Activated CD4-positive, alpha-beta memory T cell treated with anti-CD3 and anti-CD28 coated beads, Interleukin-2, amount 10 ng/mL, durations not matched to agents 7 days and 5 days (primary cell): ENCODE measurements at regions of chr7 and their contacts with region 1.

Region 1: DNA sequence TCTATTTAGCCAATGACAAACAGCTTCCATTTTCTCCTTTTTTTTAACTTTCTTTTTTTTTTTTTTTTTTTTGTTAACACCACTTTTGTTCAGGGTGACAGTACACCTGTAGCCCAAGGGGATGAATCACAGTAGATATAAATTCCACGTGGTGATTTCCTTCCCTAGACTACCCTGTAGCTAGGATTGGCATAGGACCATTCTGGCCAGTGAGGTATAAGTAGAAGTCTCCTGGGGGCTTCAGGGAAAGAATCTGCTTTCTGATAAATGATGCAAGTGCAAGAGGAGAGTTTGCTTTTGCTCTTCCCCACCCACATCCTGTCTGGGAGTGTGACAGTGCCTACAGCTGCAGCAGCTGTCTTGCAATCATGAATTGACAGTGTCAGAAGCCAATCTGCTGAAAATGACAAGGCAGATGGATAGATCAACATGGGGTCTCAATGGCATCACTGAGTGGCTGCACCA is 63.2 kb upstream of the TOMM7 start:
- DNase-seq: peak; percentile 77
- H3K4me3 Mint-ChIP-seq: peak overlapping the region; percentile 57
- H3K27ac Mint-ChIP-seq: peak overlapping the region; percentile 90
- H3K4me1 Mint-ChIP-seq: peaks cover 24% of the 10 kb centered on the region
- H3K27me3 Mint-ChIP-seq: no peaks in the 10 kb centered on the region

Region 2: GRCh38 chr7:22841954-22842353 is 43.9 kb before region 1 on chr7:
- CTCF ChIA-PET with region 1: no interaction called
- POLR2A ChIA-PET with region 1: no interaction called
- DNase-seq: no peak
- H3K4me3 Mint-ChIP-seq: no peak overlapping the region
- H3K27ac Mint-ChIP-seq: no peak overlapping the region
- H3K4me1 Mint-ChIP-seq: peaks cover 4% of the 10 kb centered on the region
- H3K27me3 Mint-ChIP-seq: peaks cover 5% of the 10 kb centered on the region

Region 3: DNA sequence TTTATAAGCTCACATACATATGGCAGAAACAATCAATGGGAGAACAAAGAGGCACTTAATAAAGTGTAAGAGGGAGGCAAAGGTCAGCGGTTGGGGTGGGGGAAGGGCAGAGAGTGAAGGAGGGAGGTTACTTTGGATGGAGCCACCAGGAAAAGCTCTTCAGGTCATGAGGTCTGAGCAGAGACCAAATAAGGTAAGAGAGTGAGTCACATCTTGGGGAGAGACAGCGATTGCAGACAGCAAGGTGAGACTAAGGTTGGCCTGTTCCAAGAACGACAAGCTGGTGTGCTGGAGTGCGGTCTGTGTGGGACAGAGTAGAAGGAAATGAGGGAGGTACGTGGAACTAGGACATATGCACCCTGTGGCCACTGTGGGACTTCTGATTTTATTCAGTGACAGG is 11.1 kb after region 1 on chr7:
- CTCF ChIA-PET with region 1: interaction called, 3 read pairs
- POLR2A ChIA-PET with region 1: interaction called, 12 read pairs
- DNase-seq: peak; percentile 44
- H3K4me3 Mint-ChIP-seq: no peak overlapping the region
- H3K27ac Mint-ChIP-seq: peak overlapping the region; percentile 1
- H3K4me1 Mint-ChIP-seq: peaks cover 19% of the 10 kb centered on the region
- H3K27me3 Mint-ChIP-seq: peaks cover 20% of the 10 kb centered on the region

Region 4: GRCh38 chr7:22911889-22912288 is 26.1 kb after region 1 on chr7:
- CTCF ChIA-PET with region 1: no interaction called
- POLR2A ChIA-PET with region 1: no interaction called
- DNase-seq: no peak
- H3K4me3 Mint-ChIP-seq: no peak overlapping the region
- H3K27ac Mint-ChIP-seq: no peak overlapping the region
- H3K4me1 Mint-ChIP-seq: no peaks in the 10 kb centered on the region
- H3K27me3 Mint-ChIP-seq: no peaks in the 10 kb centered on the region